ENCODE measurements at regions of chr5 and their contacts with region 1.

Region 1: DNA sequence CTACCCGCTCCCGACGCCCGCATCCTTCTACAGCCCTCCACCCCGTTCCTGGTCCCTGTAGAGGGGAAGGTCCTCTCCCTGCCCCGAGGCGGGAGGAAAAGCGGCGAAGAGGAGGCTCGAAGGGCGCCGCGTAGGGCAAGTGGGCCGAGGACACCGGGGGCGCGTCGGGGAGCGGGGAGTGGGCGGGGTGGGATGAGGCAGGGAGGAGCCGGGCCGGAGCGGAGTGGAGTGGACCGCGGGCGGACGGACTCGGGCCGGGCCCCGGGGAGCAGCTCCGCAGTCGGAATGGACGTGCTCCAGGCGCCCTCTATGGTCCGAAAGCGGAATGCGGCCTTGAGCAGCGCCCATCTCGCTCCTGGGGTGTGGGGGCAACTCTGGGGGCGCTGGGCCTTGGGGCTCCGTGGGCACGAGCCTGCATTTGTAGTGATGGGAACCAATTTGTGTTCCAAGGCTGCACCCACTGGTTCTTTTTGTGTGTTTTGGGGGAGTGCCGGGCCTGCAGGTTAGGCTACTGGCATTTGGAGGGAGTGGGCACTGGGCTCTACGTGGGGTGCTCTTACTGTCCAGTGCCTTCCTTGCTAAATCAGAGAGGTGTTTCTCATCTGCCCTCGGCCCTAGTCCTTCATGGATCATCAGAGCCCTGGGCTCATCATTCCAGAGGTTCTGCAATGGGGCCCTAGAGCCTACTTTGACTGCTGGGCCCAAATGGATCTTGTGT is 7.3 kb downstream of the IRX1 start:
- DNase-seq: peak; percentile 59
- H3K4me3 ChIP-seq: peak overlapping the region; percentile 82 to 100 (median 97)
- H3K27ac ChIP-seq: peak overlapping the region; percentile 96
- H3K4me1 ChIP-seq: peaks cover 62% of the 10 kb centered on the region
- H3K27me3 ChIP-seq: no peaks in the 10 kb centered on the region
- CTCF ChIP-seq: peak; percentile 45 to 76

Region 2: GRCh38 chr5:2746561-2747032 is 856.3 kb before region 1 on chr5:
- CTCF ChIA-PET with region 1: no interaction called
- dilution Hi-C with region 1: loop called (anchors 5 kb)
- in situ Hi-C with region 1: loop called (anchors 5 kb)
- intact Hi-C with region 1: loop called (anchors 2 kb)
- DNase-seq: peak; percentile 84
- H3K4me3 ChIP-seq: peak overlapping the region; percentile 30 to 94 (median 78)
- H3K27ac ChIP-seq: peak overlapping the region; percentile 81
- H3K4me1 ChIP-seq: peaks cover 33% of the 10 kb centered on the region
- H3K27me3 ChIP-seq: no peaks in the 10 kb centered on the region
- CTCF ChIP-seq: peak; percentile 2 to 30

Region 3: GRCh38 chr5:3490957-3491507 is 111.9 kb before region 1 on chr5:
- CTCF ChIA-PET with region 1: no interaction called
- dilution Hi-C with region 1: no loop called
- in situ Hi-C with region 1: no loop called
- intact Hi-C with region 1: no loop called
- DNase-seq: no peak
- H3K4me3 ChIP-seq: no peak overlapping the region
- H3K27ac ChIP-seq: no peak overlapping the region
- H3K4me1 ChIP-seq: no peaks in the 10 kb centered on the region
- H3K27me3 ChIP-seq: no peaks in the 10 kb centered on the region
- CTCF ChIP-seq: no peak

Region 4: DNA sequence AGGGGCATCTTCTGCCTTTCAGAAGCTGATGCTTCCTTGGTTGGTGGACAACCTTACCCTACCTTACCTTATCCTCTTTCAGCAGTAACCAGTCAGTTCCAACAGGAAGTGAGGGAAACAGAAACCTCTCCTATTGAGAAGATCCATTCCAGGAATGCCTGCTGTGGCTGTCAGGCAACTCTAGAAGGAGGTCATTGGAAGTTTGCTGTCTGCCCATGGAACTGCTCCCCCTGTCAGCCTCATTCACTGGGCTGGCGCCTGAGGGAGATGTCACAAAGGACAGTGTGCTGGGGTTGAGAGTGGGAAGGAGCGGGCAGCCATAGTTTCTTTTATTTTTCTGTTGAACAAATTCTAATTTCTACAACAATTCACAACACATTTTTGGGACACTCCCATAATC is 47.4 kb after region 1 on chr5:
- CTCF ChIA-PET with region 1: no interaction called
- dilution Hi-C with region 1: no loop called
- in situ Hi-C with region 1: no loop called
- intact Hi-C with region 1: no loop called
- DNase-seq: no peak
- H3K4me3 ChIP-seq: no peak overlapping the region
- H3K27ac ChIP-seq: no peak overlapping the region
- H3K4me1 ChIP-seq: no peaks in the 10 kb centered on the region
- H3K27me3 ChIP-seq: no peaks in the 10 kb centered on the region
- CTCF ChIP-seq: no peak

Region 5: DNA sequence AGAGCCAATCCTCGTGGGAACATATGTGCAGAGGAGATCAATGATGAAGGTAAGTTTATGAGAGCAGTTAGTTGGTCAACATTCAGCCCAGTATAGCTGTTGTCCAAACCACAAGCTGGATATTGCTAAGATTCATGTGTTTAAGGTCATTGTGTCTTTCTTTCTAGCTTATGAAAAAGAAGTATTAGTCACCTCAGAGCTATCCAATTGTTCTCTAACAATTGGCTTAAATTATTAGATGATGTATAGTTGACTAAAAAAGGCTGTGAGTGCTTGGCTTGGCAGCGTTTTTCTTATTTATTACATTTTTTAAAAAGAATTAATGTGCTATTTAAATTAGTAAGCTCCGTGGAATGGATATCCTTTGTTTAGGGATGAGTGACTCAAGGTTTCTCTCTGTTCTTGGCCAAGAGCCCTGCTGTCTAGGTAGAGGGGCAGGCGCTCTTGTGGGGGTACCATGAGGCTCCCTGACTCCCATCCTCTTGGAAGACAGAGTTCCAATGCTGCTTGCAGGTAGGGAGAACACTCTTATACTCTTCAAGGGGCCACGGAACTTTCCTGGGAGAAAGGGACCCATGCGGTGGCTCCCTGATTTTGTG is 480.1 kb after region 1 on chr5:
- CTCF ChIA-PET with region 1: interaction called, 4 read pairs
- dilution Hi-C with region 1: no loop called
- in situ Hi-C with region 1: loop called in 1 of 2 experiments (anchors 25 kb)
- intact Hi-C with region 1: loop called (anchors 2 kb)
- DNase-seq: peak; percentile 94
- H3K4me3 ChIP-seq: no peak overlapping the region
- H3K27ac ChIP-seq: peak overlapping the region; percentile 96
- H3K4me1 ChIP-seq: peaks cover 43% of the 10 kb centered on the region
- H3K27me3 ChIP-seq: no peaks in the 10 kb centered on the region
- CTCF ChIP-seq: no peak

Region 6: GRCh38 chr5:4246447-4246846 is 643.5 kb after region 1 on chr5:
- CTCF ChIA-PET with region 1: no interaction called
- dilution Hi-C with region 1: no loop called
- in situ Hi-C with region 1: no loop called
- intact Hi-C with region 1: loop called (anchors 5 kb)
- DNase-seq: peak; percentile 83
- H3K4me3 ChIP-seq: no peak overlapping the region
- H3K27ac ChIP-seq: no peak overlapping the region
- H3K4me1 ChIP-seq: peaks cover 7% of the 10 kb centered on the region
- H3K27me3 ChIP-seq: no peaks in the 10 kb centered on the region
- CTCF ChIP-seq: no peak

Region 7: GRCh38 chr5:4511996-4512662 is 909.2 kb after region 1 on chr5:
- CTCF ChIA-PET with region 1: no interaction called
- dilution Hi-C with region 1: no loop called
- in situ Hi-C with region 1: loop called in 1 of 2 experiments (anchors 5 kb)
- intact Hi-C with region 1: loop called (anchors 1 kb)
- DNase-seq: peak; percentile 65
- H3K4me3 ChIP-seq: peak overlapping the region; percentile 6 to 31 (median 28)
- H3K27ac ChIP-seq: peak overlapping the region; percentile 34
- H3K4me1 ChIP-seq: peaks cover 56% of the 10 kb centered on the region
- H3K27me3 ChIP-seq: no peaks in the 10 kb centered on the region
- CTCF ChIP-seq: peak; percentile 72 to 89

Region 8: GRCh38 chr5:4868109-4868735 is 1265.3 kb after region 1 on chr5:
- CTCF ChIA-PET with region 1: no interaction called
- dilution Hi-C with region 1: no loop called
- in situ Hi-C with region 1: no loop called
- intact Hi-C with region 1: loop called (anchors 10 kb)
- DNase-seq: peak; percentile 23
- H3K4me3 ChIP-seq: no peak overlapping the region
- H3K27ac ChIP-seq: no peak overlapping the region
- H3K4me1 ChIP-seq: no peaks in the 10 kb centered on the region
- H3K27me3 ChIP-seq: no peaks in the 10 kb centered on the region
- CTCF ChIP-seq: peak; percentile 88 to 95

Measured in mammary epithelial cell (primary cell).